ENCODE measurements at regions of chr6 and their contacts with region 1.

Region 1: DNA sequence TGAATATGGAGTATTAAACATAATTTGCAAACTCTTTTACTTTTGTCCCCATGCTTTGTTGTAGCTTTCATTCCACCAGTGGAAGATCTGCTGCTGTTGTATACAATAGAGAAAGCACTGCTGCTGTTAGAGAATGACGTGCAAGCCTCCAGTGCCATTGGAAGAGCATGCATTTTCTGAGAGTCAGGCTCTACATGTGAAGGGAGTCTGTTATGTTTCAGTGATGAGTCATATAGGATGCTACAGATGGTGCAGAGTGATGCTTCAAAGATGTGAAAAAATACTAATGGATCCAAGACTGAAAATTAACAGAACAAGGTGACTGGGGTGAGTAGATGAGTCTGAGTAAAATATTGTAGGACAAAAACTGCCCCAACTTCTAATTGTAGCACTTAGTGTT is 22.4 kb upstream of the BACH2 start:
- DNase-seq: no peak
- H3K4me3 ChIP-seq: no peak overlapping the region
- H3K27ac ChIP-seq: peak overlapping the region; percentile 31
- H3K4me1 ChIP-seq: peaks cover 77% of the 10 kb centered on the region
- CTCF ChIP-seq: no peak

Region 2: GRCh38 chr6:90304308-90304707 is 14.7 kb before region 1 on chr6:
- CTCF ChIA-PET with region 1: interaction called, 4 read pairs
- POLR2A ChIA-PET with region 1: interaction called, 74 read pairs
- intact Hi-C with region 1: loop called (anchors 1 kb)
- DNase-seq: peak; percentile 96
- H3K4me3 ChIP-seq: peak overlapping the region; percentile 46
- H3K27ac ChIP-seq: peak overlapping the region; percentile 87
- H3K4me1 ChIP-seq: peaks cover 84% of the 10 kb centered on the region
- CTCF ChIP-seq: no peak

Region 3: DNA sequence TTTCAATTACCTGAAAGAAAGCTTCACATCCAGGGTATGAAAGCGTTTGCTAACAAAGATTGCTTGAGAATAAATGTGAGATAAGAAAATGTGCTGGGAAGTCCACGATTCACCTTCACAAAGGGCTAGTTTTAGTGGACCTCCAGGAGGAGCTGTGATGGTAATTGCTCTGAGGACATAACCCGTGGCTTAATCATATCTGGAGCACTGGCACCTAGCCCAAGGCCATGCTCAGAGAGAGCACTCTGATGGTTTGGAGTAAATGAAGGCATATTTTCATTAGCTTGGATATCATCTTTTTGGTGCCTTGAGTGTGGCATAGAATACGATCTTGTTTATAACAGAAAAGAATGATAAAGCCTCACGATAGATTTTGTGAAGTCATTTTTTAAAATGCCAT is 24.5 kb after region 1 on chr6:
- CTCF ChIA-PET with region 1: no interaction called
- POLR2A ChIA-PET with region 1: interaction called, 12 read pairs
- intact Hi-C with region 1: no loop called
- DNase-seq: no peak
- H3K4me3 ChIP-seq: no peak overlapping the region
- H3K27ac ChIP-seq: no peak overlapping the region
- H3K4me1 ChIP-seq: no peaks in the 10 kb centered on the region
- CTCF ChIP-seq: no peak

Region 4: DNA sequence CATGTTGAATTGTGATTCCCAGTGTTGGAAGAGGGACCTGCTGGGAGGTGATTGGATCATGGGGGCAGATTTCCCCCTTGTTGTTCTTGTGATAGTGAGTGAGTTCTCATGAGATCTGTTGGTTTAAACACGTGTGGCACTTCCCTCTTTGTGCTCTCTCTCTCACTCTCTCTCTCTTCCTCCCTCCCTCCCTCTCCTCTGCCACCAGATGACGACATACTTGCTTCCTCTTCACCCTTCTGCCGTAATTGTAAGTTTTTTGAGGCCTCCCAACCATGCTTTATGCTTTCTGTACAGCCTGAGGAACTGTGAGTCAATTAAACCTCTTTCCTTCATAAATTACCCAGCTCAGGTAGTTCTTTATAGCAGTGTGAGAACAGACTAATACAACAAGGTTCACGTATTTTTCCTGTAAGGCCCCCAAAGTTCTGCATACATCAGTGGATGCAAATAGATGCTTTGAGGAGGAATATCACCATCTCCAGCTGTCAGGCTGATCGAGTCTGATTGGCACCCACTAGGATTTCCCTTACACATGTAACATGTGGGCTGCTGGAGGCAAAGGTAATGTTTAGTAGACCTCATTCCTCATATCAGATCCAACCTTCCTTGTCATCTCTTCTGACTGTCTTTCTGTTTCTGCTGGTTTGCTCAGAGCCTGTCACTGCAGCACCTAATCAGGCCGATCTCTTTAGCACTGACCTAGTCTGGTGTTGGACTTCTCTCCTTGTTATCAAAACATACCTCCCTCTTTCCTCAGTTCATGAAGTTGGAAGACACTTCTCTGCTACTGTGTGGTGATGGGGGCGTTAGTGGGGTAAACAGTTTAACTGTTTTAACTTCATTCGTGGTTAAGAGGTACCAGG is 31.9 kb after region 1 on chr6:
- CTCF ChIA-PET with region 1: interaction called, 6 read pairs
- POLR2A ChIA-PET with region 1: interaction called, 18 read pairs
- intact Hi-C with region 1: loop called (anchors 2 kb)
- DNase-seq: peak; percentile 92
- H3K4me3 ChIP-seq: peak overlapping the region; percentile 8
- H3K27ac ChIP-seq: peak overlapping the region; percentile 68
- H3K4me1 ChIP-seq: peaks cover 43% of the 10 kb centered on the region
- CTCF ChIP-seq: no peak

Region 5: DNA sequence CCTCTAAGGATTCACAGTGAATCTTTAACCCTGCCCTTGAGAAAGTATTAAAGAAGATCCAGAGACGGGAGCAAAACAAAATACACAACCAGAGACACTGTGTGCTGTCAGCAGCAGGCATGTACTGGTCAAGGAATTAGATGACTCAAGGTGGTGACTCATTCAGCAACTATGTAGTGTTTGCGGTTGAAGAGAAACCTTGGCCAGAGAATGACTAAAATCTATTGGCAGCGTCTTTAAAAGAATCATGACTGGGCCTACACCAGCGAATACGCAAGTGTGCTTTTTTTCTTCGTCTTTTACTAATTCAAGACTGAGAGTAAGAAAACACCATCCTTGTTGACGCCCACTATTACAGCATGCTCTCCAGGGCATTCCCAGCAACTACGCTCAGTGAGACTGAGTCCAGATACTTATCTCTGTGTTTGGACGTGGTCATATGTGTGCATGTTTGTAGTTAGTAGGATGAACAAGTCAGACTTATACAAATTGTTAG is 50.0 kb after region 1 on chr6:
- CTCF ChIA-PET with region 1: interaction called, 4 read pairs
- POLR2A ChIA-PET with region 1: interaction called, 46 read pairs
- intact Hi-C with region 1: no loop called
- DNase-seq: no peak
- H3K4me3 ChIP-seq: no peak overlapping the region
- H3K27ac ChIP-seq: no peak overlapping the region
- H3K4me1 ChIP-seq: peaks cover 56% of the 10 kb centered on the region
- CTCF ChIP-seq: no peak

Region 6: DNA sequence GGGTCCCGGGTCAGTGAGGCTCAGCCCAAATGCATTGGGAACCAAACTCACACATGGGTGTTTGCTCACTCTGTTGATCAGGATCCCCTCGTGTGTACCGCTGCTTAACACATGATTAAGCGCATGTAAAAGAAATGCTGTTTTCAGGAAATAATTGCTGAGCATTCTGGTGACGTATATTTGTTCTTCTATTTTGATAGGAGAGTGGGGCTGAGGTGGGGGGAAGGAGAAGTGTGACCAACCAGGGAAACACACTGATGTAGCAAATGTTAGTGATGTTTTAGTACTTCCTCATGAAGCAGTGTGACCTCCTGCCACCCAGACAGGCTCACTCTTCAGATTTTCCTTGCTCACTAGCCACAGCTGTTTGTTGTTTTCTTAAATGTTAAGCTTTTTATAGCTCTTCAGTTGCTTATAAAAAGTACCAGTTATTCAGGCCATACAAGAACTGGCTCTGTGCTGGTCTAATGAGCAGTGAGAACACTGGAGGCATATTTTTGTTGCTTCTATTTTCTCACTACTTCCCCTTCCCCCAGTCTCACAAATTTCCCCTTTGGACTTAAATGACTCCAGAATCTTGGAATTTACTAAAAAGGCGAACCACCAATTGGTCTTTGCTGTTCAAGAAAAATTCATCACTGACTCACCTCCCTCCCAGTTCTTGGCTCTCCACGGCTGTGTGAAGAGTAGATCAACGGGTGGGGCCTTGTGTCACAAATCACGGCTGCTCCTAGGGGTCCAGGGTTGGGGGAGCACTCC is 56.8 kb after region 1 on chr6:
- CTCF ChIA-PET with region 1: interaction called, 4 read pairs
- POLR2A ChIA-PET with region 1: interaction called, 46 read pairs
- intact Hi-C with region 1: loop called (anchors 1 kb)
- DNase-seq: peak; percentile 97
- H3K4me3 ChIP-seq: peak overlapping the region; percentile 68
- H3K27ac ChIP-seq: peak overlapping the region; percentile 100
- H3K4me1 ChIP-seq: peaks cover 98% of the 10 kb centered on the region
- CTCF ChIP-seq: no peak

Region 7: GRCh38 chr6:90383196-90383822 is 64.3 kb after region 1 on chr6:
- CTCF ChIA-PET with region 1: interaction called, 3 read pairs
- POLR2A ChIA-PET with region 1: interaction called, 34 read pairs
- intact Hi-C with region 1: no loop called
- DNase-seq: peak; percentile 89
- H3K4me3 ChIP-seq: peak overlapping the region; percentile 59
- H3K27ac ChIP-seq: peak overlapping the region; percentile 97
- H3K4me1 ChIP-seq: peaks cover 97% of the 10 kb centered on the region
- CTCF ChIP-seq: no peak

Region 8: DNA sequence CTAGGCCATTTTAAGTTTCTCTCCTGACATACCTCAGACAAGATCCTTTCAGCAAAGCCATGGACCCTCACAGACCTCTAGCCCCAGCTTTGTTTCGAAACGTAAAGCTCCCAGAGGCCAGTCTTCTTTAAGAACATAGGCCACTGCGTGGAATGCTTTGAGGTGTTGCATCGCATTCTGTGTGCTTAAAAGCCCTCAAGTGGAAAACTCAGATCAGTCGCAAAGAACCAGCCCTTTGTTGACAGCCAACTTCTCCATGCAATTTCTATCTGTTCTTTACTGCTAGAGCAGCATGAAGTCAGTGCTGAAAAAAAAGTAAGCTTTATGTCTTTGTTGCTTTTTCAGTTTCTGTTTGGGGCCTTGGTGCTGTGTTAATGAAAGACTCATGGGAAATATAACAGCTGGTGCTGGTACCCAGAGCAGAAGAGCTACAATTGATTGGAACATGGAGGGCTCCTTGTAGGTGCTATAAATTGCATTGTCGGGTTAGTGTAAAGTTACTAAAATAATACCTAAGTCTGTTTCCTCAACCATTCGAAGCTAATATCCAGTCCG is 125.2 kb after region 1 on chr6:
- CTCF ChIA-PET with region 1: no interaction called
- POLR2A ChIA-PET with region 1: no interaction called
- intact Hi-C with region 1: no loop called
- DNase-seq: no peak
- H3K4me3 ChIP-seq: no peak overlapping the region
- H3K27ac ChIP-seq: no peak overlapping the region
- H3K4me1 ChIP-seq: no peaks in the 10 kb centered on the region
- CTCF ChIP-seq: no peak

Measured in OCI-LY7 (cell line).